Thyroid gland (tissue), 4 donors: ENCODE measurements at regions of chr11 and their contacts with region 1.

Region 1: GRCh38 chr11:66616379-66617154 is at the start of gene RBM14:
- DNase-seq: peak; percentile 99 to 100
- H3K4me3 ChIP-seq: peak within 1 kb of the TSS; percentile 58 to 85 (median 82)
- H3K27ac ChIP-seq: peak within 1 kb of the TSS; percentile 86 to 92 (median 89)
- H3K4me1 ChIP-seq: peaks cover 35 to 43% of the 10 kb centered on the region in 2 donors
- H3K27me3 ChIP-seq: no peaks in the 10 kb centered on the region
- CTCF ChIP-seq: no peak
- POLR2A ChIP-seq: peak; percentile 96 to 99
- total RNA-seq, gene RBM14: 31.8 to 76.9 (median 62.9) TPM

Region 2: DNA sequence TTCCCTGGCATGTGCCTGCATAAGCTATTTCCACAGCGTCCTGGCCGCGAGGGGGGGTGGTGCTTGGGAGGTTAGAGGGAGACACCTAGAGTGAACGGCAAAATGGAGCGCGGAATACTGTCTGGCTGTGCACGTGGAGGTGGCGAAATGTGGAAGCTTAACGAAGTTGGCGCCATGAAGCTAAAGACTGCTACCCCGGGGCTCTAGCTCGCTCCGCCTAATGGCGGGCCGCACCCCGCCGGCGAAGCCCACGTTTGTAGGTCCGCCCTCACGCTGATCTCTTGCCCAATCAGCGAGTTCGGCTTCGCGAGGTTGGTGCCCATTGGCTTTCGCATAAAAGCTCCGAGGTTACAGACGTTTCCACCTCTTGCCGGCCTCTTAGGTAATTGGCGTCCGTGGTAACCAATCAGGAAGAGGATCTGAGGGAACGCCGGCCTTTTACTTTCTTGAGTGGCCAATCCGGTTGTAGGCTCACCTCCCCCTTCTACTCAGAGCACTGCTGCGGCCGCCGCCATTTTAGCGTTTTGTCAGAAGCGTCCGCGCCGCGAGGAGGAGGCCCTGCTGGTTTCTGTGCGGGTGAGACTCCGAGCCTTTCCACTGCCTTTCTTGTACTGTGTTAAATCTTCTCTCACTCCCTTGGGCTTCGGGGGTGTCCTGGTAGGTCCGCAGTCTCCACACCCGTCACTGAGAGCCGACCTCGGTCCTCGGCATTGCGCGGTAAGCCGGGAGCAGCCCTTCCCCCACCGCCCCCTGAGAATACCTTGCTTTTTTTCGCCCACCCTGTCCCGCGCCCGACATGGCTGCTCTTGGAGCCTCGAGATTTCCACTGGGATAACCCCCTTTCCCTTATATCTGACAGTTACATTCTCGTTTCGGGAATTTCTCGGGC is 21.9 kb after region 1 on chr11 and contains the start of gene RBM4:
- intact Hi-C with region 1: loop called (anchors 2 kb)
- DNase-seq: peak; percentile 98
- H3K4me3 ChIP-seq: peak within 1 kb of the TSS; percentile 38 to 78 (median 42)
- H3K27ac ChIP-seq: peak within 1 kb of the TSS; percentile 60 to 89 (median 82)
- H3K4me1 ChIP-seq: peaks cover 40 to 49% of the 10 kb centered on the region in 2 donors
- H3K27me3 ChIP-seq: no peaks in the 10 kb centered on the region
- CTCF ChIP-seq: peak in 2 of 6 experiments; percentile 4 to 14
- POLR2A ChIP-seq: peak; percentile 82 to 94
- total RNA-seq, gene RBM4: 104 to 147 (median 131) TPM